Sigmoid colon (tissue), 7 donors: ENCODE measurements at regions of chr11 and their contacts with region 1.

Region 1: GRCh38 chr11:74170694-74171629 is at the starts of genes C2CD3 and PPME1:
- DNase-seq: peak; percentile 99
- H3K4me3 ChIP-seq: peak within 1 kb of the TSS; percentile 52 to 80 (median 70)
- H3K27ac ChIP-seq: peak within 1 kb of the TSS; percentile 86 to 94 (median 92)
- H3K4me1 ChIP-seq: peaks cover 0 to 39% (median 30%) of the 10 kb centered on the region in 4 donors
- H3K27me3 ChIP-seq: no peaks in the 10 kb centered on the region
- CTCF ChIP-seq: no peak
- EP300 ChIP-seq: peak in 1 of 4 donors; percentile 65
- POLR2A ChIP-seq: peak; percentile 65 to 68
- total RNA-seq, gene C2CD3: 12.1 to 29.1 (median 19.7) TPM
- total RNA-seq, gene PPME1: 17.7 to 21.9 (median 19.5) TPM

Region 2: DNA sequence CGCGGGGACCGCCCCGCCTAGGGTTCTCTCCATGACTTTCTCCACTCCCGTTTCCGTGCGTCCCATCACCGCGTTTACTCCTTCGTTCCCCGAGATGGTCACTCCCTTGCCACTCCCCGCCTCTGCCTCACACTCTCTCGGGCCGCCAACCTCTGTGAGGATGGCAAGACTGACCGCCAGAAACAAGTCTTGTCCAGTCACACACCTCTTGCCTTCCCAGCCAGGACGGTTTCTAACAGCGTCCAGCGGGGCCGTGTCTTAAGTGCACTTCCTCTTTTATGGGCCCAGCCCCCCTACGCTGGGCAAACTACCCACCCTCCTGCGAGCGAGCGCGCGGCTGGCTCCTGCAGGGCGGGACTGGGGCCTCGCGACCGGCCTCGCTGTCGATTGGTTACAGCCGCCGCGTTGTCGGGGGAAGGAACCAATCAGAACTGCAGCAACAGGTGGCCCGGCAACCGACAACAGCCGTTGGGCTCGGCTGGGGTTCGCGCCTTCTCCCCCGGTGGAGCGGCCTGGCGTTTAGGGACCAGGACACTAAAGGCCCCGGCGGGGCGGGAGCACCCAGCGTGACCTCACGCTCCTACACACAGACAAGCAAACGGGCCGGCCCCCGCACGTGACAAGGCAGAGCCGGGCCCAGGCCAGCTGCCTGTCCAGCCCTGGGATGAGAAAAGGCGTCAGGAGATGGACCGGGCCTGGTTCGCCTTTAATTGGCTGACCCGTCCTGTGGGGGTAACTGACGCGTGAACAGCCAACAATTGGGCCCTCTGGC is 187.8 kb before region 1 on chr11:
- intact Hi-C with region 1: loop called (anchors 5 kb)
- DNase-seq: peak; percentile 97
- H3K4me3 ChIP-seq: peak overlapping the region; percentile 44 to 65 (median 57)
- H3K27ac ChIP-seq: peak overlapping the region; percentile 82 to 95 (median 90)
- H3K4me1 ChIP-seq: peaks cover 0 to 19% (median 14%) of the 10 kb centered on the region in 4 donors
- H3K27me3 ChIP-seq: no peaks in the 10 kb centered on the region
- CTCF ChIP-seq: no peak
- EP300 ChIP-seq: peak in 1 of 4 donors; percentile 14
- POLR2A ChIP-seq: peak; percentile 18 to 42

Region 3: DNA sequence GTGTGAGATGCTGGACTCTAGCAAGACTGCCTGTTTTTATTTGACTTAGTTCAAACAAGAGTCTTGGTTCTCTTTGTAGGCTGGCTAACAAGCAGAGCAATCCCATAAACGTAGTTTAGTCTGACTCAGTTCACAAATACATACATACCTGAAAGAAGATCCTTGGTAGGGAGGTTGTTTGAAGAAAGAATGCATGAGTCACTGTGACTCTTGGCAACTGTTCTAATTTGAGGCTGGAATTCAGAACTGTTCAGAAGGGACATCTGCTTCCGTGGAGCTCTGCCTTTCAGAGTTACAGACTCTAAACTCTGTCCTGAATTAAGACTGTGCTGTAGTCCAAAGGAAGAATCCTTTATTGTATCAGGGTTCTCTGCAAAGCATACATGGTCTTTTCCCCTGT is 32.4 kb before region 1 on chr11:
- intact Hi-C with region 1: loop called (anchors 2 kb)
- DNase-seq: no peak
- H3K4me3 ChIP-seq: no peak overlapping the region
- H3K27ac ChIP-seq: peak overlapping the region; percentile 58 to 81 (median 74)
- H3K4me1 ChIP-seq: peaks cover 0 to 37% (median 32%) of the 10 kb centered on the region in 4 donors
- H3K27me3 ChIP-seq: no peaks in the 10 kb centered on the region
- CTCF ChIP-seq: no peak
- EP300 ChIP-seq: no peak
- POLR2A ChIP-seq: no peak

Region 4: DNA sequence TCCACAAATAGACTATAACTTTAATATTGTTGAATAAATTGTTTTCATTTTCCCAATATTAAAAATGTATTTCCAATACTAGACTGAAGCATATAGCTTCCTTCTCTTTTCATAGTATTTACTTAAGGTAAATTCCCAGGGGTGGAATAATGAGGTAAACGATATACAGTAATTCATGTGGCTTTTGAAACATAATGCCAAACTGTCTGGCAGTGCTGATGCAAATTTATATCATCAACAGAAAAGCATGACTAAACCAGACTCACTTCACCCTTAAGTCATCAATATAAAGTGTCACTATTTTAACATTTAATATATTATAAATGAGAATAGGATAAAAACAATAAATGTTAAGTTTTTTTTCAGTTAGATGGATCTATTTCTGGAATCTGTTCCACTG is 13.8 kb before region 1 on chr11:
- intact Hi-C with region 1: no loop called
- DNase-seq: no peak
- H3K4me3 ChIP-seq: no peak overlapping the region
- H3K27ac ChIP-seq: no peak overlapping the region
- H3K4me1 ChIP-seq: peaks cover 0 to 5% (median 0%) of the 10 kb centered on the region in 4 donors
- H3K27me3 ChIP-seq: no peaks in the 10 kb centered on the region
- CTCF ChIP-seq: no peak
- EP300 ChIP-seq: no peak
- POLR2A ChIP-seq: no peak